ENCODE measurements at regions of chr2 and their contacts with region 1.

Region 1: GRCh38 chr2:209960676-209961630 is 41.5 kb upstream of the RPE start:
- DNase-seq: peak; percentile 48
- H3K4me3 ChIP-seq: no peak overlapping the region; a peak in 1 of 4 replicates
- H3K27ac ChIP-seq: no peak overlapping the region
- H3K4me1 ChIP-seq: no peaks in the 10 kb centered on the region; a peak in 1 of 4 replicates
- H3K27me3 ChIP-seq: no peaks in the 10 kb centered on the region
- CTCF ChIP-seq: peak; percentile 81
- EP300 ChIP-seq: no peak
- RAD21 ChIP-seq: peak; percentile 80

Region 2: DNA sequence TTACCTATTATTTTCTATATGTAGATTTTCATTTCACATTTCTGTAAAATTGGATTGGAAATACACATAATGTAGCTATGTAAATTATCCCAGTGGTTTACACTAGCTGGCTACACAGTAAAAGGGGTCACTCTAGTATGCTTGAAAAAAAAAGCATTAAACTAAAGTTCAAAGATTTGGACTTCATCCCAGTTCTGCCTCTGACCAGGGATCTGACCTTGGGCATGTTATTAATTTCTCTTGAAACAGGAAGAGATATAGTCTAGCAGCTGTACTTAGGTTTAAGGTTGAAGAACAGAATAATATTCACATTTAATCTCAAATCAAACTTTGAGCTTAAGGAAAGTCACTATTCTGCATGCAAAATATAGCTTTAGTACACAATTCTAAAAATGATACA is 23.1 kb before region 1 on chr2:
- CTCF ChIA-PET with region 1: interaction called, 11 read pairs
- POLR2A ChIA-PET with region 1: no interaction called
- DNase-seq: peak; percentile 3
- H3K4me3 ChIP-seq: no peak overlapping the region
- H3K27ac ChIP-seq: no peak overlapping the region
- H3K4me1 ChIP-seq: peaks cover 5% of the 10 kb centered on the region in 2 experiments; a peak in 3 of 4 replicates
- H3K27me3 ChIP-seq: no peaks in the 10 kb centered on the region
- CTCF ChIP-seq: no peak
- EP300 ChIP-seq: no peak
- RAD21 ChIP-seq: no peak

Region 3: GRCh38 chr2:209946539-209946938 is 14.4 kb before region 1 on chr2:
- CTCF ChIA-PET with region 1: interaction called, 18 read pairs
- POLR2A ChIA-PET with region 1: no interaction called
- DNase-seq: no peak
- H3K4me3 ChIP-seq: no peak overlapping the region
- H3K27ac ChIP-seq: peak overlapping the region in 1 of 2 experiments; percentile 25; a peak in 2 of 4 replicates
- H3K4me1 ChIP-seq: peaks cover 0 to 12% of the 10 kb centered on the region in 2 experiments; a peak in 1 of 4 replicates
- H3K27me3 ChIP-seq: no peaks in the 10 kb centered on the region
- CTCF ChIP-seq: no peak
- EP300 ChIP-seq: no peak; a peak in 1 of 4 replicates
- RAD21 ChIP-seq: no peak

Region 4: GRCh38 chr2:210366675-210367080 is 405.7 kb after region 1 on chr2:
- CTCF ChIA-PET with region 1: no interaction called
- POLR2A ChIA-PET with region 1: no interaction called
- DNase-seq: no peak
- H3K4me3 ChIP-seq: no peak overlapping the region
- H3K27ac ChIP-seq: no peak overlapping the region
- H3K4me1 ChIP-seq: no peaks in the 10 kb centered on the region
- H3K27me3 ChIP-seq: no peaks in the 10 kb centered on the region
- CTCF ChIP-seq: no peak
- EP300 ChIP-seq: no peak
- RAD21 ChIP-seq: no peak

Region 5: GRCh38 chr2:210818473-210818872 is 857.5 kb after region 1 on chr2:
- CTCF ChIA-PET with region 1: no interaction called
- POLR2A ChIA-PET with region 1: no interaction called
- DNase-seq: no peak
- H3K4me3 ChIP-seq: no peak overlapping the region
- H3K27ac ChIP-seq: no peak overlapping the region
- H3K4me1 ChIP-seq: no peaks in the 10 kb centered on the region
- H3K27me3 ChIP-seq: no peaks in the 10 kb centered on the region
- CTCF ChIP-seq: no peak
- EP300 ChIP-seq: no peak
- RAD21 ChIP-seq: no peak